Activated CD4-positive, alpha-beta T cell treated with anti-CD3 and anti-CD28 coated beads, Interleukin-2, amount 10 ng/mL, durations not matched to agents 24 days and 14 days (primary cell): ENCODE measurements at regions of chr6 and their contacts with region 1.

Region 1: GRCh38 chr6:135880066-135880972 is 28.8 kb downstream of the PDE7B start:
- DNase-seq: peak; percentile 91
- H3K4me3 Mint-ChIP-seq: peak overlapping the region; percentile 81
- H3K27ac Mint-ChIP-seq: peak overlapping the region; percentile 97
- H3K4me1 Mint-ChIP-seq: peaks cover 57% of the 10 kb centered on the region
- H3K27me3 Mint-ChIP-seq: no peaks in the 10 kb centered on the region

Region 2: DNA sequence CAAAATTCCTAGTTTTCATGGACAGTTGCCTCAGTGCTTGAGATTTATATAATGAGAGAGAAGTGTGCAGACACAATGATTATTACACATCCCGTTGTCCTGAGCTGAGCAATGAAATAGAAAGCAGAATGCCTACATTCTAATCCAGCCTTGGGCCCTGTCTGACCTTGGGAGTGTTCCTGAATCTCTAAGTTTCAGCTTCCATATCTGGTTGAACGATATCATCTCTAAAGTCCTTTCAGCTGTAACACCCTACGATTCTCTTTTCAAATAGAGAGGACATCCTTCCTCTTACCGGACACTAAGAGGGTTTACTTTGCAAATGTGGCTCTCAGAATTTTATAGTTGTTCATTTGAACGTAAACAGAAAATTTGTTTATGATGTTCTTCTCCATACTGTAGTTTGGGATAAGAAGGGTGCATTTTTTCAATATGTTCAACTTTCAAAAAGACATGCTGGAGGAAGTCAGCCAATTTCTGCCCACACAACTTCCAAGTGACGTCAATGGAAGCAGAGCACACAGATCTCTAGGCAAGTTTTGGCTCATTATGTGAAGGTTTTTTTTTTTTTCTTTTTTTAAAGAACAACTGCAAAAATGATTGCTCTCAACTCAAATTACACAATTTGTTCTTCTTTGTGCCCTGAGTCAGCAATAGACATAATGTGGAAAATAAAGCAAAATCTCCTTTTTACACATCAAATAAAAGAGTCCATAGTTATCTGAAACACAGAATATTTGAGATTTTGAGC is 21.6 kb after region 1 on chr6:
- intact Hi-C with region 1: loop called (anchors 2 kb)
- DNase-seq: peak; percentile 65
- H3K4me3 Mint-ChIP-seq: peak overlapping the region; percentile 66
- H3K27ac Mint-ChIP-seq: peak overlapping the region; percentile 84
- H3K4me1 Mint-ChIP-seq: peaks cover 49% of the 10 kb centered on the region
- H3K27me3 Mint-ChIP-seq: no peaks in the 10 kb centered on the region

Region 3: GRCh38 chr6:135922174-135922573 is 41.9 kb after region 1 on chr6:
- intact Hi-C with region 1: loop called (anchors 5 kb)
- DNase-seq: no peak
- H3K4me3 Mint-ChIP-seq: peak overlapping the region; percentile 2
- H3K27ac Mint-ChIP-seq: peak overlapping the region; percentile 51
- H3K4me1 Mint-ChIP-seq: peaks cover 28% of the 10 kb centered on the region
- H3K27me3 Mint-ChIP-seq: no peaks in the 10 kb centered on the region